Transverse colon (tissue), 4 donors: ENCODE measurements at regions of chr2 and their contacts with region 1.

Region 1: DNA sequence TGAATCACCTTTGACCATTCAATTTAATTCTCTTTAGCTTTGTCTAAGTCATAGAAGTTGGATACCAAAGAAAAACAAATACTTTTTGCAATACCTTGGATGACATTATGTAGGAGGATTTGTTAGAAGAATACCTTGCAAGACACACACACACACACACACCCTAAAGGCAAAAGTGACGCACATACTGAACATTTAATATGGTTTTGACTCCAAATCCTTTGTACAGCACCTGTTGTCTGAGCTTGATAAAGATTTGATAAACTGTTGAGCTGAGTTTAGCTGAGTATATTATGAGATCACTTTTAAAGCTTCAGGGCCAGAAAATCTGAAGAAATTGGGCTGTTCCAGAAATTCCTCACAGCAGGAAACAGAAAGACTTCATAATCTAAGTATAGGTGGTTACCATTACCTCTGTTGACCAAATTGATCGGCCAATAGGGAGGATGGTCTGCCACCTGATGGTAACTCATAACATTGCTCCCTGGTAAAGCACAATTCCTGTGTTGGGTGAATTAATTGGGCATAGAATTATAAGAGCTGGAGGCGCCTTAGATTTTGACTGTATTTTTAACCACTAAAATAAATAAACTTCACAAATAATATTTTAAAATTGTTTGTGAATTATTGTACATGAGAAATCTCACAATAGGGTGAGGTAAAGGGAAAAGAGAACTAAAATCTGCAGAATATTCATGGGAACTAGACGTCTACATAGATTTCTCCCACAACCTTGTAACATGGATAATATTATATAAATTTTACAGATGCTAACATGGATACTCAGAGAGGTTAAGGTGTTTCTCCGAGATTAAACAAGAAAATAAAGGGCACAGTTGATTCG is 21.9 kb upstream of the RPIA start:
- DNase-seq: peak; percentile 23
- H3K4me3 ChIP-seq: no peak overlapping the region
- H3K27ac ChIP-seq: no peak overlapping the region
- H3K4me1 ChIP-seq: peaks cover 0 to 5% (median 0%) of the 10 kb centered on the region in 4 donors
- H3K27me3 ChIP-seq: no peaks in the 10 kb centered on the region
- CTCF ChIP-seq: peak; percentile 40 to 61 (median 60)
- EP300 ChIP-seq: no peak
- POLR2A ChIP-seq: no peak

Region 2: DNA sequence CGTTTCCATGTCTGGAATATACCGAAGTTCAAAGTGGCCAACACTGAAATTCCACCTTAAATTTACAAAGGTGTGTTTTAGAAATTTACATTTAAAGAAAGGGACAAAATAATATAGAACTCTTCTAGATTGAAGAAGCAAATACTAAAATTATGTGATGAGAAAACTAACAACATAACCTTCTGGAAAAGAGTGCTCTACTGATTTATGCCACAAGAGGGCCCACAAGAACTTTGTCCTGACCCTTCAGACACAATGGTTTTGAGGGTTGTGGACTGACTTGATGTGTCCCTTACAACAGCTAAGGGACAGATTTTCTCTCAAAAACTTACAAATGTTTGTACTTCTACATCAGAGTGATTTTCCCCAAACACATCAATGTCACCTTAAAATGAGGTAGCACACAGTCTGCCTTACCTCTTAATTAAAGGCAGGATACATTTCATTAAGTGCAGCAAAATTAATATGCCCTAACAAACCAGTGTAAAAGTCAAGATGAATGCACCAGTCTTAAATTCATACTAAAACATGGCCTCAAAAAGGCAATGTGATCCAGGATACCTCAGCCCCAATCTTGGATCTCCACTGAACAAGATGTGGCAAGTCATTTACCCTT is 78.5 kb before region 1 on chr2:
- in situ Hi-C with region 1: loop called (anchors 5 to 10 kb)
- intact Hi-C with region 1: loop called (anchors 5 kb)
- DNase-seq: peak; percentile 29
- H3K4me3 ChIP-seq: no peak overlapping the region
- H3K27ac ChIP-seq: no peak overlapping the region
- H3K4me1 ChIP-seq: no peaks in the 10 kb centered on the region
- H3K27me3 ChIP-seq: no peaks in the 10 kb centered on the region
- CTCF ChIP-seq: peak; percentile 74 to 81 (median 78)
- EP300 ChIP-seq: no peak
- POLR2A ChIP-seq: no peak

Region 3: GRCh38 chr2:88599527-88599926 is 70.1 kb before region 1 on chr2:
- in situ Hi-C with region 1: loop called (anchors 5 to 10 kb)
- intact Hi-C with region 1: loop called (anchors 5 kb)
- DNase-seq: no peak
- H3K4me3 ChIP-seq: no peak overlapping the region
- H3K27ac ChIP-seq: peak overlapping the region; percentile 54 to 61 (median 60)
- H3K4me1 ChIP-seq: peaks cover 8 to 32% (median 14%) of the 10 kb centered on the region in 4 donors
- H3K27me3 ChIP-seq: no peaks in the 10 kb centered on the region
- CTCF ChIP-seq: no peak
- EP300 ChIP-seq: no peak
- POLR2A ChIP-seq: no peak